Activated T-helper 1 cell treated with anti-CD3 and anti-CD28 coated beads, Interleukin-12 subunit alpha, Interleukin-12 subunit beta, Interleukin-2, Interleukin-4 antibody, amounts not matched to agents 30 ng/mL and 10 ng/mL and 1 ng/mL, durations not matched to agents 14 hours and 24 hours and 36 hours (primary cell): ENCODE measurements at regions of chr3 and their contacts with region 1.

Region 1: DNA sequence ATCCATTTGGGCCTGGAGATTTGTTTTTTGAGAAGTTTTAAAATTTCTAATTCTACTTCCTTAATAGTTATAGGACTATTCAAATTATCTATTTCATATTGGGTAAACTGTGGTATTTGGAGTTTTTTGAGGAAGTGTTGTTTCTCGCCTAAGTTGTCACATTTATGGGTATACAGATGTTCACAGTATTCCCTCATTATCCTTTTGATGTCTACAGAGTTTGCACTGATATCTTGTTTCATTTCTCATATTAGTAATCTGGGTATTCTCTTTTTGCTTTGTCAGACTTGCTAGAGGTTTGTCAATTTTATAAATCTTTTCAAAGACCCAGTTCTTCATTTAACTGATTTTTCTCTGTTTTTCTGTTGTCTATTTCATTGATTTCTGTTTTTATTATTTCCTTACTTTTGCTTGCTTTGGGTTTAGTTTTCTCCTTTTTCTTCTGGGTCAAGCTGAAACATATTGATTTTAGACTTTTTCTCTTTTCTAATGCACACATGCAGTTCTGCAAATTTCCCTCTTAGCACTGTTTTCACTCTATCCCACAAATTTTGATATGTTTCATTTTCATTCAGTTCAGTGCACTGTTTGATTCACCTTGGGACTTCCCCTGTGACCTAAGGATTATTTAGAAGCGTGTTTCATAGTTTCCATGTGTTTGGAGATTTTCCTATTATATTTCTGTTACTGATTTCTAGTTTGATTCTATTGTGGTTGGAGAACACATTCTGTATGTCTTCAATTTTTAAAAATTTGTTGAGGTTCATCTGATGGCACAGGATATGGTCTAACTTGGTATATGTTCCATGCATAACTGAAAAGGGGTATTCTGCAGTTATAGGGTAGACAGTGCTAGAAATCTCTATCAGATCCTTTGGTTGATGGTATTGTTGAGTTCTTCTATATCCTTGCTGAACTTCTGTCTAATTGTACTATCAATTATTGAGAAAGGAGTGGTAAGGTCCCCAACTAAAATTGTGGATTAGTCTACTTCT is 79.6 kb downstream of the SUMF1 start:
- DNase-seq: no peak
- H3K4me3 Mint-ChIP-seq: peak overlapping the region; percentile 8
- H3K27ac Mint-ChIP-seq: peak overlapping the region; percentile 88
- H3K4me1 Mint-ChIP-seq: peaks cover 52% of the 10 kb centered on the region
- H3K27me3 Mint-ChIP-seq: peaks cover 1% of the 10 kb centered on the region

Region 2: GRCh38 chr3:4350789-4351163 is 36.7 kb before region 1 on chr3:
- intact Hi-C with region 1: loop called (anchors 1 kb)
- DNase-seq: peak; percentile 37
- H3K4me3 Mint-ChIP-seq: peak overlapping the region; percentile 9
- H3K27ac Mint-ChIP-seq: peak overlapping the region; percentile 31
- H3K4me1 Mint-ChIP-seq: peaks cover 20% of the 10 kb centered on the region
- H3K27me3 Mint-ChIP-seq: peaks cover 4% of the 10 kb centered on the region

Region 3: DNA sequence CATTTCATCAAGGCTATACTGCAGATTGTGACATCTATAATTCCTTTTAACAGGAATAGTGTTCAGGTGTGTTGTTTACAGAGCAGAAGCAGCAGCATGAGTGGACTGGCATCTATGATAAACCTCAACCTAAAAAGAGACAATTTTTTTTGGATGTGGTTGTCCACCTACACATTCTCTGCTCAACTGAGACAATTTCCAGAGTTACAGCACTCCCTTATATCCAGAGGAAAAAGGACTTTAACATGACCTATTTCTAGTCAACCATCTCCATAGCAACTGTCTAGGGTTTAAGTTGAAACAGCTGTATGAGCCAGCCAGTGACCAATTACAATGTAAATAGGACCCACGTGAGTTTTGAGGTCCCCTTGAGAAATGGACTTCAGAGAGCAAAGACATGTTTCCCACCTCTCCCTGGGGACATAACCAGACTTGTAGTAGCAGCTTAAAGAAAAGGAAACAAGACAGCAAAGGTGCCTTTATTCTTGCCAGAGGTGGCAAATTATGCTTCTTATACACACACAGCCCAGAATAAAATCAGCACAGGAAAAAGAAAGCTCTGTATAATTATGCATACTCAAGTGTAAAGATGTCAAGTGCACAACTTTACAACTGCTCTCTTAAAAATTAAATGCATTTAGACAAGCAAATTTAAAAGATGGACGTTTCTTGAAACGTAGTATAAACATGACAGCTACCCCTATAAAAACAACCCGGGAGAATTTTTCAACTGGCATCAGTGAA is 39.3 kb after region 1 on chr3:
- intact Hi-C with region 1: loop called (anchors 1 kb)
- DNase-seq: no peak
- H3K4me3 Mint-ChIP-seq: no peak overlapping the region
- H3K27ac Mint-ChIP-seq: no peak overlapping the region
- H3K4me1 Mint-ChIP-seq: peaks cover 25% of the 10 kb centered on the region
- H3K27me3 Mint-ChIP-seq: no peaks in the 10 kb centered on the region

Region 4: DNA sequence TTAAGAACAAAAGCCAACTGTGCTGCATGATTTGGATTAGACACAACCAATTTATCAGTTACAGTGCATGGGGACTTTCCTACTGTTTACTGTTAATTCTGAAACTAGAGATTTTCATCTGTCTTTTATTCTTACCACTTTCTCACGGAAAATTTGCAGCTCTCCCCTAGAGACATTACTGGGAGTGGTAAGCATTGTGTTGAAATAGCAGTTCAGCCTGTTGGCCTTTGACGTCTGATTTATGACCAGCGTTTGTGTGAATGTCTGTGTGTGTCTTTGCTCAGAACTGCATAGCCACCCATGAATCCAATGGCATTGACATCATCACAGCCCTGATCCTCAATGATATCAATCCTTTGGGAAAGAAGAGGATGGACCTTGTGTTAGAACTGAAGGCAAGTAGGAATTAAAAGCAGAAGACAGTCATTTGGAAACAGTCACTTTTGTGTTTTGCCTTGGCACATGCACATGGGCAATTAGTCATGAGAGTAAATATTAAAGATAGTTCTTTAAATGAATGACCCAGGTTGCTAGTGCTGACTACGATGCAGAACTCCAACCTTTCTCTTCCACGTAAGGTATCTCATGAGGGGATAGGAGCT is 389.6 kb after region 1 on chr3:
- intact Hi-C with region 1: loop called (anchors 1 kb)
- DNase-seq: peak; percentile 32
- H3K4me3 Mint-ChIP-seq: peak overlapping the region; percentile 73
- H3K27ac Mint-ChIP-seq: peak overlapping the region; percentile 98
- H3K4me1 Mint-ChIP-seq: peaks cover 82% of the 10 kb centered on the region
- H3K27me3 Mint-ChIP-seq: no peaks in the 10 kb centered on the region

Region 5: GRCh38 chr3:5006755-5007202 is 619.3 kb after region 1 on chr3:
- intact Hi-C with region 1: loop called (anchors 10 kb)
- DNase-seq: peak; percentile 88
- H3K4me3 Mint-ChIP-seq: peak overlapping the region; percentile 71
- H3K27ac Mint-ChIP-seq: peak overlapping the region; percentile 89
- H3K4me1 Mint-ChIP-seq: peaks cover 72% of the 10 kb centered on the region
- H3K27me3 Mint-ChIP-seq: no peaks in the 10 kb centered on the region

Region 6: DNA sequence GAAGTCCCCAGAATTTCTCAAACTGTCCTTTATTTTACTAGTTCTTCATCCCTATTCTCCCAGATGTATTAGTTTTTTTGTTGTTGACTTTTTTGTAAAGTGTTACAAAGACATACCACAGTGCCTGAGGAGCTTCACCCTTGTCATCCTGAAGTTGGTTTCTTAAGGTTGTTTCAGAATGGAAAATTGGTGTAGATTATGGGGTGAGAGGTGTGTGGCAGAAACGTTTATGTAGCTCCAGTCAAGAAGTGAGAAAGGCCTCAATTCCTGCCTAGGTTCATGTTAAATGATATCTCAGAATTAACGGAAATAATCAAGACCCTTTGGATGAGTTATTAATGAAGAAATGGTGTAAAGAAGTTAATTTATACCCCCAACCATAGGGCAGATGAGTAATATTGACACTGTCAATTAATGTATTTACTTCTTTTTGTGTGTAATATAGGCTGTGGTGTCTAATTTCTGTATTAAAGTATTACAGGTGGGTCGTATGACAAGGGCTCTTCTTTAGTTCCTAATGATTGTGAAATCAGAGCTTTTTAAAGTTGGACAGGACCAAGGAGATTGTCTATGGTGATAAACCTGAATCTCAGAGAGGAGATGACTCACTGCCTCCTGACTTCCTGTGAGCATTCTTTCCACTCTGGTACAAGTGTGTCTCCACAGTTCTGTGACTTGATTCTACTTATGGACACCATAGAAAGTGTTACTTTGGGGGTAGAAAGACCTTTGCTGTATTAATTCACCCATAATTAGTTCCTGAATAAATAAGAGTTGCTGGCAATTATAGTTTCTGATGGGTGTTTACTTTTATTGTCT is 807.0 kb after region 1 on chr3:
- intact Hi-C with region 1: loop called (anchors 2 kb)
- DNase-seq: peak; percentile 54
- H3K4me3 Mint-ChIP-seq: peak overlapping the region; percentile 74
- H3K27ac Mint-ChIP-seq: peak overlapping the region; percentile 97
- H3K4me1 Mint-ChIP-seq: peaks cover 88% of the 10 kb centered on the region
- H3K27me3 Mint-ChIP-seq: no peaks in the 10 kb centered on the region